HAP-1 (cell line): ENCODE measurements at regions of chr5 and their contacts with region 1.

Region 1: GRCh38 chr5:115309751-115310370 is 13.4 kb upstream of the CCDC112 start:
- DNase-seq: peak in 1 of 2 experiments; percentile 67
- H3K4me3 ChIP-seq: no peak overlapping the region
- H3K4me1 ChIP-seq: no peaks in the 10 kb centered on the region
- H3K27me3 ChIP-seq: no peaks in the 10 kb centered on the region

Region 2: GRCh38 chr5:115440782-115441451 is 131.1 kb after region 1 on chr5:
- in situ Hi-C with region 1: no loop called
- DNase-seq: no peak
- H3K4me3 ChIP-seq: no peak overlapping the region
- H3K4me1 ChIP-seq: peaks cover 5% of the 10 kb centered on the region; the same call in 1 of the 2 replicates
- H3K27me3 ChIP-seq: no peaks in the 10 kb centered on the region

Region 3: GRCh38 chr5:115579747-115580173 is 269.9 kb after region 1 on chr5:
- in situ Hi-C with region 1: loop called (anchors 5 kb)
- DNase-seq: no peak
- H3K4me3 ChIP-seq: no peak overlapping the region
- H3K4me1 ChIP-seq: no peaks in the 10 kb centered on the region
- H3K27me3 ChIP-seq: peaks cover 2% of the 10 kb centered on the region

Region 4: GRCh38 chr5:115816226-115817081 is 506.6 kb after region 1 on chr5 and contains the start of gene CDO1:
- in situ Hi-C with region 1: loop called (anchors 25 kb)
- DNase-seq: peak; percentile 44 to 79
- H3K4me3 ChIP-seq: peak within 1 kb of the TSS; percentile 57
- H3K4me1 ChIP-seq: peaks cover 18% of the 10 kb centered on the region
- H3K27me3 ChIP-seq: no peaks in the 10 kb centered on the region